A673 (cell line): ENCODE measurements at regions of chr4 and their contacts with region 1.

Region 1: DNA sequence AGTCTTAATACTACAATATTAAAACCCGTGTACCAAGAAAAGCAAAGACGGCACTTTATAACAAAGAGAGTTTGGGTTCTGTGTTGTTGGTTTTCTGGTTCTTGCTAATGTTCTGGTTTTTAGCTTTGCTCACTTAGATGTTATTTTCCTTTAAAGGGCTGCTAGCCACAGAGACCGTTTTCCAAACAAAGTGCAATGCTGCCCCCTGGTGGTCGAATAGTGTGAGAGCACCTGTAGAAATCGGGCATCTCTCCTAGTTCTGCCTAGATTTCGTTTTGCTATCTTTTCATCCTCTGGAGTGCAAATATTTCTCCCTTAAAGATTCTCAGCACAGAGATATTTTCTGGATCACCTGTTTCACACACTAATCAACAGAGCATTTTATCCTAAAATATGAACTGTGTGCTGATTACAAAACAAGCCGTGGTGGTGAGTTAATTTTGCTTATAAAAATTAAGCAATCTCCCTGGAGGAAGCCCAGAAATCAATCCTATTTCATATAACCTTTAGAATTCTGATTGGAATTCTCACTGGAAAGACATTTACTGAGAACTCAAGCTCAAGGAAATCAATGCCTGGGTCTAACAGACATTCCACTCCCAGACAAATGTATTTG is 334.5 kb upstream of the NOCT start:
- DNase-seq: peak; percentile 80
- H3K4me3 ChIP-seq: no peak overlapping the region
- H3K27ac ChIP-seq: no peak overlapping the region
- H3K4me1 ChIP-seq: no peaks in the 10 kb centered on the region
- H3K27me3 ChIP-seq: no peaks in the 10 kb centered on the region
- CTCF ChIP-seq: peak; percentile 91

Region 2: GRCh38 chr4:137735561-137736104 is 945.5 kb before region 1 on chr4:
- CTCF ChIA-PET with region 1: no interaction called
- POLR2A ChIA-PET with region 1: no interaction called
- intact Hi-C with region 1: loop called (anchors 5 kb)
- DNase-seq: no peak
- H3K4me3 ChIP-seq: no peak overlapping the region
- H3K27ac ChIP-seq: no peak overlapping the region
- H3K4me1 ChIP-seq: no peaks in the 10 kb centered on the region
- H3K27me3 ChIP-seq: no peaks in the 10 kb centered on the region
- CTCF ChIP-seq: no peak

Region 3: GRCh38 chr4:137819964-137820383 is 861.1 kb before region 1 on chr4:
- CTCF ChIA-PET with region 1: no interaction called
- POLR2A ChIA-PET with region 1: no interaction called
- intact Hi-C with region 1: loop called (anchors 2 kb)
- DNase-seq: peak; percentile 65
- H3K4me3 ChIP-seq: no peak overlapping the region
- H3K27ac ChIP-seq: no peak overlapping the region
- H3K4me1 ChIP-seq: no peaks in the 10 kb centered on the region
- H3K27me3 ChIP-seq: no peaks in the 10 kb centered on the region
- CTCF ChIP-seq: peak; percentile 77

Region 4: DNA sequence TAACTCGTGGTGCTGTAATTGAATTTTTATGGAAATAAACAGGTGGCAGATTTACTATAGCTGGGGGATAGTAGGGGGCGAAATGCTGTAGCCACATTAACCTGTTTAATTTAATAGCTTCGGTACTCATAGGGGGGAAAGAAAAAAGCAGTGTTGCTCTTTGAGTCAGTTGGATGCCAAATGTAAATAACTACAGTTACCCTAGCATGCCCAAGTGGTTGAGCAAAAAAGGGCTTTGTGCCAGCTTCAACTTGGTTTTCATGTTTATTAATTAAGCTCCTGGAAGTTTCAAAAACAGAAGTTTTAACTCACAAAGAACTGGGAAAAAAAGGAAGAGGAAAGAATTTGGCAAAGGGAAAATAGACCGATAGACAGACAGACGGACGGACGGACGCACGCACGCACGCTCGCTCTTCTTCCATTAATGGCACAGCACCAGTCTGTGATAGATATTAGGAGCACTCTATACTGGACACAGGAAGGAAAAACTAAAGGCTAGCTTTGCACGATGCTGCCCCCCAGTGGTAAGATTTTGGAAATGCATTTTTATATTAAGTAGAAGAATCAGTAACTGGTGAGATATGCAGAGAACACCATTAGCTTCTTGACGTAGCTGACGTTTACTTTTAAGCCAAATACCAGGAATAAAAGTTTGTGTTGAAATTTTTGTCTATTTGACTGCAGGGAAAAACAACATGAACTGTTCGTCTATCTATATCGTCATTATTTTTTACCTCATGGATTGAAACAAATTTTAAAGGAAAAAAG is 590.8 kb before region 1 on chr4:
- CTCF ChIA-PET with region 1: no interaction called
- POLR2A ChIA-PET with region 1: no interaction called
- intact Hi-C with region 1: loop called (anchors 5 kb)
- DNase-seq: peak; percentile 88
- H3K4me3 ChIP-seq: peak overlapping the region; percentile 38
- H3K27ac ChIP-seq: no peak overlapping the region
- H3K4me1 ChIP-seq: peaks cover 5% of the 10 kb centered on the region
- H3K27me3 ChIP-seq: no peaks in the 10 kb centered on the region
- CTCF ChIP-seq: peak; percentile 80

Region 5: DNA sequence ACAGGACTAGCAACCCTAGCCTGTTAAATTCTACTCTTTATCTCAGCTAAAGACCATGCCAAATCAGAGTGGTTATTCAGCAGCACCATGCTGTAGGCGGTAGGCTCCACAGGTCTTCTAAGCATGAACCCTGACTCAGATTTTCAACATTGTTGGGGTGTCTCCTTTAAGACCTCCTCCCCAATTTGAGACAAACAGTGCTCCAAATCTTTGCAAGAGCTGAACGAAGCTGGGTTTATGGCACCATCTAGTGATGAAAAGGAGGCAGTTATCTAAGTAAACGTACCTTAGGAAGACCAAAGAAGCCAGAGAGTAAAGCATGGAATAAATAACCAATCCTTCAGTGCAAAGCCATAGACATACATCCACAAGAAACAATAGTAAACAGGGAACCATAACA is 104.4 kb before region 1 on chr4:
- CTCF ChIA-PET with region 1: interaction called, 10 read pairs
- POLR2A ChIA-PET with region 1: no interaction called
- intact Hi-C with region 1: loop called (anchors 5 kb)
- DNase-seq: peak; percentile 73
- H3K4me3 ChIP-seq: no peak overlapping the region
- H3K27ac ChIP-seq: no peak overlapping the region
- H3K4me1 ChIP-seq: no peaks in the 10 kb centered on the region
- H3K27me3 ChIP-seq: no peaks in the 10 kb centered on the region
- CTCF ChIP-seq: peak; percentile 75

Region 6: DNA sequence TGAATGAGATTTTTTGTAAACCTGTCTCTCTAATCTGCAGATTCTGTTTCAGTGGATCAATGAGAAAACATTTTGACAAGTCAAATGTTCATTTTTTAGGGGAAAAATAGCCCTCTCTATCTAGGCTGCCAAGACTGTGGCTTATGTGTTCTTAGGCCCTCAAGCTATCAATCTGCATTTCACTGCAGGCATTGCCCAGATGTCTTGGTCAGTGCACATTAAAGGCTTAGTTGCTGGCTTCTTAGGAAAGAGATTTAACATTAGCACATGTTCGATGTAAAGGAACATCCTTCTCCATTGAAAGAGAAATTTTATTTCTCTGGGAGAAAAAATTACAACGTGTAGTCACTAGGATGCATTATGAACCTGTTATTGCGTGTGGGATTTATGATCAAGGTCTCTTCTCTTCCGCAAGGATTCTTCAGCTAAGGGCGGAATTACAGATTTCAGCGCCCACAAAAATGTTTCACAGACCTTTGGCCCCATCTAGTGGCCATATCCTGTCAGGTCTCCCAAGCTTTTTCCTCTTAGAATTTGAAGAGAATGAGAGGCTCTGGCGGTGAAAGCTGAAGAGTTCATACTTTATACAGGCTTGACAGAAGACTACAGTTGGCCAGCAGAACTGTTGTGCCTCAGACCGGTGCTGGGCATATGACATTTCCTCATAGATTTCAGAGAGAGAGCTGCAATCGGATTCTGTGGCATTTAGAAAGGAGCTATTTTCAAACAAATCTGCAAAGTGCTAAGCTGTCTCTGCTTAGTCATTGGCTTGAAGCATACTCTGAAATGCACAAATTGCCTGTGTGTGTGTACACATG is 189.8 kb after region 1 on chr4:
- CTCF ChIA-PET with region 1: interaction called, 5 read pairs
- POLR2A ChIA-PET with region 1: no interaction called
- intact Hi-C with region 1: loop called (anchors 5 kb)
- DNase-seq: peak; percentile 85
- H3K4me3 ChIP-seq: no peak overlapping the region
- H3K27ac ChIP-seq: no peak overlapping the region
- H3K4me1 ChIP-seq: no peaks in the 10 kb centered on the region
- H3K27me3 ChIP-seq: no peaks in the 10 kb centered on the region
- CTCF ChIP-seq: peak; percentile 88

Region 7: DNA sequence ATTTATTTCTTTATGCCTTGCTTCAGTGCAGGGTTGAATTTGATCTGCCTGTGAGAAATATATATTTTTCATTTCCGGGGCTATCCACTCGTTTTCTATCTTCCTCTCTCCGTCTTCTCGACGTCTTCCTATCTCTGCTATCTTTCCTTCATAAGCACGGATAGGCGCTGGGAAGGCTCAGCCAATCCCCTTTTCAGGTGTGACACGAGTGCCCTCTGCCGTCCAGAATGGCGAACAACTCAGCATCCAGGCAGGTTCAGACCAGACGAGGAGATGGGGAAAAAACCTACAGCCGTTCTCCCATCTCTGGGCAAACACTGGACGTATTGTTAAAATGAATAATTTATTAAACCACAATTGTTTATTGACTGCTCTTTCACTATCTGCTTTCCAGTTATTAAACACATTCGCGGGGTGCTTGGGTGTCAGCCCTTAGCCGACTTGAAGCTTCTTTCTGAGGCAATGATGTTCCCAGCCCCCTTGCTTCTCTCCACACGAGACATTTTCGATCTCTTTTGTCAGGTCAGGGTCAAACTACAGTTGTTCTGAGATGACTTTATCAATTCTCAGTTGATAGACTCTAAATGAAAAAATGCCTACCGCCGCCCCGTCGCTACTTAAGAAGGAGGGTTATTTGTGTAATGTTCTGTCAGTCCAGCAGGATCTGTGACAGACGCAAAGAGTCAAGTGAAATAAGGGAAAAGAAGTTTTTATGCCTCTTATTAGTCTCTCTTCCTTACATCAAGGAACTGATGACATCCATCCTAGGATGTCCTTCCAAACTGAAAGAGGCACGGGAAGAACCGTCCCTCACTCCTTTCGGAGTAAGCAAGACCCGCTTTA is 238.2 kb after region 1 on chr4:
- CTCF ChIA-PET with region 1: no interaction called
- POLR2A ChIA-PET with region 1: no interaction called
- intact Hi-C with region 1: loop called (anchors 5 kb)
- DNase-seq: peak; percentile 87
- H3K4me3 ChIP-seq: peak overlapping the region; percentile 11
- H3K27ac ChIP-seq: no peak overlapping the region
- H3K4me1 ChIP-seq: no peaks in the 10 kb centered on the region
- H3K27me3 ChIP-seq: no peaks in the 10 kb centered on the region
- CTCF ChIP-seq: peak; percentile 93